CD4-positive, alpha-beta T cell (primary cell): ENCODE measurements at regions of chr16 and their contacts with region 1.

Region 1: GRCh38 chr16:82169861-82170845 is at the start of gene MPHOSPH6:
- DNase-seq: peak; percentile 83 to 97 (median 88)
- ATAC-seq: peak; percentile 92
- H3K4me3 ChIP-seq: peak within 1 kb of the TSS; percentile 82
- H3K4me3 Mint-ChIP-seq: peak within 1 kb of the TSS; percentile 98
- H3K27ac ChIP-seq: peak within 1 kb of the TSS; percentile 71 to 76
- H3K27ac Mint-ChIP-seq: peak within 1 kb of the TSS; percentile 97
- H3K4me1 ChIP-seq: peaks cover 26% of the 10 kb centered on the region
- H3K4me1 Mint-ChIP-seq: peaks cover 35% of the 10 kb centered on the region
- H3K27me3 ChIP-seq: peaks cover 0 to 4% of the 10 kb centered on the region in 2 experiments
- H3K27me3 Mint-ChIP-seq: peaks cover 22% of the 10 kb centered on the region
- CTCF ChIP-seq: no peak
- total RNA-seq, gene MPHOSPH6: 14.3 to 15.5 TPM

Region 2: GRCh38 chr16:81006814-81007696 is 1163.1 kb before region 1 on chr16 and contains the starts of genes CENPN and CMC2:
- CTCF ChIA-PET with region 1: interaction called, 3 read pairs
- POLR2A ChIA-PET with region 1: no interaction called
- intact Hi-C with region 1: loop called in 1 of 2 experiments (anchors 10 kb)
- DNase-seq: peak; percentile 96 to 99 (median 98)
- ATAC-seq: peak; percentile 77
- H3K4me3 ChIP-seq: peak within 1 kb of the TSS; percentile 79
- H3K4me3 Mint-ChIP-seq: peak within 1 kb of the TSS; percentile 90
- H3K27ac ChIP-seq: peak within 1 kb of the TSS; percentile 94 to 99
- H3K27ac Mint-ChIP-seq: peak within 1 kb of the TSS; percentile 99
- H3K4me1 ChIP-seq: peaks cover 39% of the 10 kb centered on the region
- H3K4me1 Mint-ChIP-seq: peaks cover 46% of the 10 kb centered on the region
- H3K27me3 ChIP-seq: no peaks in the 10 kb centered on the region
- H3K27me3 Mint-ChIP-seq: no peaks in the 10 kb centered on the region
- CTCF ChIP-seq: no peak
- total RNA-seq, gene CENPN: 8.7 to 9.7 TPM
- total RNA-seq, gene CMC2: 67.7 to 68.8 TPM

Region 3: GRCh38 chr16:81314603-81315270 is 855.4 kb before region 1 on chr16 and contains the start of gene GAN:
- CTCF ChIA-PET with region 1: no interaction called
- POLR2A ChIA-PET with region 1: interaction called, 7 read pairs
- intact Hi-C with region 1: loop called in 1 of 2 experiments (anchors 5 kb)
- DNase-seq: peak; percentile 85 to 97 (median 91)
- ATAC-seq: peak; percentile 96
- H3K4me3 ChIP-seq: peak within 1 kb of the TSS; percentile 78
- H3K4me3 Mint-ChIP-seq: peak within 1 kb of the TSS; percentile 95
- H3K27ac ChIP-seq: peak within 1 kb of the TSS in 1 of 2 donors; percentile 41
- H3K27ac Mint-ChIP-seq: peak within 1 kb of the TSS; percentile 89
- H3K4me1 ChIP-seq: peaks cover 27% of the 10 kb centered on the region
- H3K4me1 Mint-ChIP-seq: peaks cover 62% of the 10 kb centered on the region
- H3K27me3 ChIP-seq: no peaks in the 10 kb centered on the region
- H3K27me3 Mint-ChIP-seq: no peaks in the 10 kb centered on the region
- CTCF ChIP-seq: no peak
- total RNA-seq, gene GAN: 4.5 to 4.7 TPM

Region 4: DNA sequence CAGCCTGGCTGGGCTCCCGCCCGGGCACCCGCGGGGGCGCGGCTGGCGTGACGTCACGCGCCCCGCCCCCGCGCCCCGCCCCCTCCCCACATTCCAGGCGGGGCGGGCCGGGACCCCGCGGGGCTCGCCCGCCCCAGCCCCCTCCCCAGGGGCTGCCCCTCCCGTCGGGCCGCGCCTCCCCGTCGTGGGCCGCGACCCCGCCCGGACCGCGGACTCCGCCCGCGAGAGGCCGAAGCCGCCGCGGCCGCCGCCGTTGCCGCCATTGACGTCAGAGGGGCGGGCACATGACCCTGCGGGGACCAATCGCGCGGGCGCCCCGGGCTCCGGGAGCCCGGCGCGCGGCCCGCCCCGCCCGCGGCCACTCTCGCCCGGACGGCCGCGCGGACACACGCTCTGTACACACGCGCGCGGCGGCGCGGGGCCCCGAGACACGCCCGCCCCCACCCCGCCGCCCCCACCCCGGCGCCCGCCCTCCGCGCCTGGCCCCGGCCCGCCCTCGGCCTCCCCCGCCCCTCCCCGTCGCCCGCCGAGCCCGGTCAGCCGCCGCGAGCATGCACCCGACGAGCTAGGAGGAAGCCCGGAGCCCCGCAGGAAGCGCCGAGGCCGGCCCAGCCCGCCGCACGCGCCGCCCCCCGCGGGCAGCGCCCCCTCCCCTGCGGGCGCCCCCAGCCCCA is 725.6 kb before region 1 on chr16 and contains the start of gene CMIP:
- CTCF ChIA-PET with region 1: no interaction called
- POLR2A ChIA-PET with region 1: no interaction called
- intact Hi-C with region 1: loop called in 1 of 2 experiments (anchors 10 kb)
- DNase-seq: peak; percentile 58 to 91 (median 72)
- ATAC-seq: peak; percentile 58
- H3K4me3 ChIP-seq: peak within 1 kb of the TSS; percentile 77
- H3K4me3 Mint-ChIP-seq: peak within 1 kb of the TSS; percentile 96
- H3K27ac ChIP-seq: peak within 1 kb of the TSS; percentile 41 to 48
- H3K27ac Mint-ChIP-seq: peak within 1 kb of the TSS; percentile 99
- H3K4me1 ChIP-seq: peaks cover 50% of the 10 kb centered on the region
- H3K4me1 Mint-ChIP-seq: peaks cover 54% of the 10 kb centered on the region
- H3K27me3 ChIP-seq: no peaks in the 10 kb centered on the region
- H3K27me3 Mint-ChIP-seq: no peaks in the 10 kb centered on the region
- CTCF ChIP-seq: no peak
- total RNA-seq, gene CMIP: 33.5 to 35.3 TPM

Region 5: GRCh38 chr16:81873843-81874752 is 296.1 kb before region 1 on chr16:
- CTCF ChIA-PET with region 1: no interaction called
- POLR2A ChIA-PET with region 1: no interaction called
- intact Hi-C with region 1: no loop called
- DNase-seq: peak in 11 of 14 experiments; percentile 11 to 57 (median 30)
- ATAC-seq: peak; percentile 55
- H3K4me3 ChIP-seq: no peak overlapping the region
- H3K4me3 Mint-ChIP-seq: no peak overlapping the region
- H3K27ac ChIP-seq: no peak overlapping the region
- H3K27ac Mint-ChIP-seq: no peak overlapping the region
- H3K4me1 ChIP-seq: peaks cover 3% of the 10 kb centered on the region
- H3K4me1 Mint-ChIP-seq: peaks cover 4% of the 10 kb centered on the region
- H3K27me3 ChIP-seq: no peaks in the 10 kb centered on the region
- H3K27me3 Mint-ChIP-seq: no peaks in the 10 kb centered on the region
- CTCF ChIP-seq: peak; percentile 65

Region 6: GRCh38 chr16:82133798-82134197 is 36.4 kb before region 1 on chr16:
- CTCF ChIA-PET with region 1: no interaction called
- POLR2A ChIA-PET with region 1: interaction called, 19 read pairs
- intact Hi-C with region 1: no loop called
- DNase-seq: peak in 4 of 14 experiments; percentile 22 to 52 (median 32)
- ATAC-seq: peak; percentile 72
- H3K4me3 ChIP-seq: peak overlapping the region; percentile 13
- H3K4me3 Mint-ChIP-seq: peak overlapping the region; percentile 50
- H3K27ac ChIP-seq: no peak overlapping the region
- H3K27ac Mint-ChIP-seq: peak overlapping the region; percentile 55
- H3K4me1 ChIP-seq: peaks cover 14% of the 10 kb centered on the region
- H3K4me1 Mint-ChIP-seq: peaks cover 19% of the 10 kb centered on the region
- H3K27me3 ChIP-seq: no peaks in the 10 kb centered on the region
- H3K27me3 Mint-ChIP-seq: no peaks in the 10 kb centered on the region
- CTCF ChIP-seq: no peak

Region 7: GRCh38 chr16:82201931-82202330 is 31.8 kb after region 1 on chr16:
- CTCF ChIA-PET with region 1: no interaction called
- POLR2A ChIA-PET with region 1: no interaction called
- intact Hi-C with region 1: no loop called
- DNase-seq: no peak
- ATAC-seq: no peak
- H3K4me3 ChIP-seq: no peak overlapping the region
- H3K4me3 Mint-ChIP-seq: no peak overlapping the region
- H3K27ac ChIP-seq: no peak overlapping the region
- H3K27ac Mint-ChIP-seq: no peak overlapping the region
- H3K4me1 ChIP-seq: no peaks in the 10 kb centered on the region
- H3K4me1 Mint-ChIP-seq: no peaks in the 10 kb centered on the region
- H3K27me3 ChIP-seq: no peaks in the 10 kb centered on the region
- H3K27me3 Mint-ChIP-seq: no peaks in the 10 kb centered on the region
- CTCF ChIP-seq: no peak

Region 8: GRCh38 chr16:82639666-82640336 is 469.6 kb after region 1 on chr16:
- CTCF ChIA-PET with region 1: no interaction called
- POLR2A ChIA-PET with region 1: no interaction called
- intact Hi-C with region 1: loop called in 1 of 2 experiments (anchors 10 kb)
- DNase-seq: peak; percentile 15 to 66 (median 34)
- ATAC-seq: no peak
- H3K4me3 ChIP-seq: no peak overlapping the region
- H3K4me3 Mint-ChIP-seq: no peak overlapping the region
- H3K27ac ChIP-seq: no peak overlapping the region
- H3K27ac Mint-ChIP-seq: no peak overlapping the region
- H3K4me1 ChIP-seq: no peaks in the 10 kb centered on the region
- H3K4me1 Mint-ChIP-seq: peaks cover 5% of the 10 kb centered on the region
- H3K27me3 ChIP-seq: no peaks in the 10 kb centered on the region
- H3K27me3 Mint-ChIP-seq: no peaks in the 10 kb centered on the region
- CTCF ChIP-seq: peak; percentile 73

Region 9: GRCh38 chr16:83807710-83808572 is 1637.8 kb after region 1 on chr16 and contains the start of gene HSBP1:
- CTCF ChIA-PET with region 1: no interaction called
- POLR2A ChIA-PET with region 1: no interaction called
- intact Hi-C with region 1: loop called in 1 of 2 experiments (anchors 10 kb)
- DNase-seq: peak; percentile 89 to 96 (median 91)
- ATAC-seq: peak; percentile 99
- H3K4me3 ChIP-seq: peak within 1 kb of the TSS; percentile 86
- H3K4me3 Mint-ChIP-seq: peak within 1 kb of the TSS; percentile 100
- H3K27ac ChIP-seq: peak within 1 kb of the TSS; percentile 46 to 74
- H3K27ac Mint-ChIP-seq: peak within 1 kb of the TSS; percentile 93
- H3K4me1 ChIP-seq: peaks cover 28% of the 10 kb centered on the region
- H3K4me1 Mint-ChIP-seq: peaks cover 43% of the 10 kb centered on the region
- H3K27me3 ChIP-seq: no peaks in the 10 kb centered on the region
- H3K27me3 Mint-ChIP-seq: no peaks in the 10 kb centered on the region
- CTCF ChIP-seq: no peak
- total RNA-seq, gene HSBP1: 17.4 to 21.9 TPM